PC-3 (cell line): ENCODE measurements at regions of chr13 and their contacts with region 1.

Region 1: DNA sequence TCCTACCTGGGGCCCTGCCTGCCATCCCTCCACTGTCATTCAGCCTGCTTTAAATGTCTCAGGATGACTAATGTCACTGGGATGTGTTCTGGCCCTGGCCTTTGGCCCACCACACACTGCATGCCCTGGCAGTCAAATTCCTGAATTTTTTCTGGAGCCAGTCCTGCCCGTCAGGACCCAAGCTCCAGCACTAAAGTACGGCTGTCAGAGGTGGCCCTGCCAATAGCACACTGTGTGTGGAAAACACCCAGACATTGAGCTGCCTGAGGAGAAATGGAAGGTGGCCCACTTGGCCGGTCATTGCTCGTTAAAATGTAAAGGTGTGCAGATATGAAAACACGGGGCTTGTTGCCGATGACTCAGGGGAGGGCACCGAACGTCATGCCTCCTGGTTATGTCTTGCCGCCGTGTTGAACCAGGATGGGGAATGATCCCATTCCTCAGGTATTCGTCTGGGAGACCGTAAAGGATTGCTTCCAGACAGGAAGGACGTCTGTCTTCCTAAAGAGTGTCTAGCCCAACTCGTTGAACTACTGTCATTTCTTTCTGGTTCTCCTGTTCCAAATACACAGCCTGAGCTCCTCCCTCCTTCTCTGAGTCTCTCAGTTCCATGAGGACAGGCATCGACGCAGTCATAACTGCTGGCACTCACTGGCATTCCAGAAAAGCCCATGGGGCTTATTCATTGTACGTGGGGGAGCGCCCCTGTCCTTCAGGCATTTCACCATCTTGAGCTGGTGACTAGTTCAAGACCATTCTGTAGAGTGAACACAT is 40.6 kb downstream of the COL4A2 start:
- DNase-seq: peak; percentile 93
- ATAC-seq: peak; percentile 49
- H3K4me3 ChIP-seq: peak overlapping the region; percentile 39; the same call in 1 of the 2 replicates
- H3K27ac ChIP-seq: peak overlapping the region; percentile 92
- H3K4me1 ChIP-seq: peaks cover 70% of the 10 kb centered on the region
- H3K27me3 ChIP-seq: no peaks in the 10 kb centered on the region
- CTCF ChIP-seq: no peak

Region 2: GRCh38 chr13:110306960-110307746 is 40.6 kb before region 1 on chr13 and contains the starts of genes COL4A1 and COL4A2:
- CTCF ChIA-PET with region 1: no interaction called
- POLR2A ChIA-PET with region 1: interaction called, 3 read pairs
- intact Hi-C with region 1: loop called (anchors 2 kb)
- DNase-seq: peak; percentile 65
- ATAC-seq: peak; percentile 48
- H3K4me3 ChIP-seq: peak within 1 kb of the TSS; percentile 72
- H3K27ac ChIP-seq: peak within 1 kb of the TSS; percentile 49
- H3K4me1 ChIP-seq: peaks cover 42% of the 10 kb centered on the region
- H3K27me3 ChIP-seq: no peaks in the 10 kb centered on the region
- CTCF ChIP-seq: no peak
- total RNA-seq, gene COL4A1: 35.7 and 48.7 TPM in 2 replicates
- total RNA-seq, gene COL4A2: 74.5 and 127 TPM in 2 replicates

Region 3: DNA sequence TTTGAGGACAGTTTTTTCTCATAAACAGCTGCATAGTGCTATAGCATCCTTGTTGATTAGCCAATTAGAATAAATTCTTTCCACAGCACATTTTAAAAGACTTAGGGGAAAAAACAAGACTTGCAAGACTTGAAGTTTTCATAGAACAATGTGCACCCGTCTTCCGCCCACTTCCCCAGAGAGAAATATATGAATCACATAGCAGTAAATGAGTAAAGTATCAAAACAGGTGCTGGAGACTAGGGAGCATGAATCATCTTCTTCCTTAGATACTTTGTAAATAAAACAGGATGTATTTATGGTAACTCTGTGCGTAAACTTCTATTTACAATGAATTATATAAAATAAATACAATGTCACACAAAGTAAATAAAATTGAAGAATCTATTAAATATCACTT is 34.5 kb after region 1 on chr13:
- CTCF ChIA-PET with region 1: no interaction called
- POLR2A ChIA-PET with region 1: interaction called, 6 read pairs
- intact Hi-C with region 1: loop called (anchors 2 kb)
- DNase-seq: peak; percentile 82
- ATAC-seq: peak; percentile 72
- H3K4me3 ChIP-seq: no peak overlapping the region
- H3K27ac ChIP-seq: peak overlapping the region; percentile 97
- H3K4me1 ChIP-seq: peaks cover 39% of the 10 kb centered on the region
- H3K27me3 ChIP-seq: no peaks in the 10 kb centered on the region
- CTCF ChIP-seq: no peak

Region 4: GRCh38 chr13:110390567-110390966 is 42.8 kb after region 1 on chr13:
- CTCF ChIA-PET with region 1: no interaction called
- POLR2A ChIA-PET with region 1: no interaction called
- intact Hi-C with region 1: loop called (anchors 2 kb)
- DNase-seq: peak; percentile 89
- ATAC-seq: peak; percentile 97
- H3K4me3 ChIP-seq: no peak overlapping the region
- H3K27ac ChIP-seq: peak overlapping the region; percentile 97
- H3K4me1 ChIP-seq: peaks cover 20% of the 10 kb centered on the region
- H3K27me3 ChIP-seq: no peaks in the 10 kb centered on the region
- CTCF ChIP-seq: no peak

Region 5: GRCh38 chr13:110421696-110422385 is 74.1 kb after region 1 on chr13:
- CTCF ChIA-PET with region 1: no interaction called
- POLR2A ChIA-PET with region 1: no interaction called
- intact Hi-C with region 1: no loop called
- DNase-seq: no peak
- ATAC-seq: no peak
- H3K4me3 ChIP-seq: no peak overlapping the region
- H3K27ac ChIP-seq: no peak overlapping the region
- H3K4me1 ChIP-seq: no peaks in the 10 kb centered on the region
- H3K27me3 ChIP-seq: no peaks in the 10 kb centered on the region
- CTCF ChIP-seq: no peak